ENCODE measurements at regions of chr14 and their contacts with region 1.

Region 1: GRCh38 chr14:39102969-39103957 is at the start of gene SEC23A:
- DNase-seq: peak; percentile 84
- ATAC-seq: peak; percentile 91
- H3K4me3 ChIP-seq: peak within 1 kb of the TSS; percentile 94
- H3K27ac ChIP-seq: peak within 1 kb of the TSS; percentile 74
- H3K4me1 ChIP-seq: peaks cover 15% of the 10 kb centered on the region
- H3K27me3 ChIP-seq: no peaks in the 10 kb centered on the region
- CTCF ChIP-seq: no peak
- total RNA-seq, gene SEC23A: 58.2 and 67.0 TPM in 2 replicates

Region 2: GRCh38 chr14:39114073-39114838 is 11.0 kb after region 1 on chr14 and contains the start of gene GEMIN2:
- CTCF ChIA-PET with region 1: interaction called, 5 read pairs
- POLR2A ChIA-PET with region 1: interaction called, 17 read pairs
- intact Hi-C with region 1: no loop called
- DNase-seq: peak; percentile 97
- ATAC-seq: peak; percentile 98
- H3K4me3 ChIP-seq: peak within 1 kb of the TSS; percentile 90
- H3K27ac ChIP-seq: peak within 1 kb of the TSS; percentile 56
- H3K4me1 ChIP-seq: peaks cover 15% of the 10 kb centered on the region
- H3K27me3 ChIP-seq: no peaks in the 10 kb centered on the region
- CTCF ChIP-seq: no peak
- total RNA-seq, gene GEMIN2: 42.7 and 48.1 TPM in 2 replicates

Region 3: DNA sequence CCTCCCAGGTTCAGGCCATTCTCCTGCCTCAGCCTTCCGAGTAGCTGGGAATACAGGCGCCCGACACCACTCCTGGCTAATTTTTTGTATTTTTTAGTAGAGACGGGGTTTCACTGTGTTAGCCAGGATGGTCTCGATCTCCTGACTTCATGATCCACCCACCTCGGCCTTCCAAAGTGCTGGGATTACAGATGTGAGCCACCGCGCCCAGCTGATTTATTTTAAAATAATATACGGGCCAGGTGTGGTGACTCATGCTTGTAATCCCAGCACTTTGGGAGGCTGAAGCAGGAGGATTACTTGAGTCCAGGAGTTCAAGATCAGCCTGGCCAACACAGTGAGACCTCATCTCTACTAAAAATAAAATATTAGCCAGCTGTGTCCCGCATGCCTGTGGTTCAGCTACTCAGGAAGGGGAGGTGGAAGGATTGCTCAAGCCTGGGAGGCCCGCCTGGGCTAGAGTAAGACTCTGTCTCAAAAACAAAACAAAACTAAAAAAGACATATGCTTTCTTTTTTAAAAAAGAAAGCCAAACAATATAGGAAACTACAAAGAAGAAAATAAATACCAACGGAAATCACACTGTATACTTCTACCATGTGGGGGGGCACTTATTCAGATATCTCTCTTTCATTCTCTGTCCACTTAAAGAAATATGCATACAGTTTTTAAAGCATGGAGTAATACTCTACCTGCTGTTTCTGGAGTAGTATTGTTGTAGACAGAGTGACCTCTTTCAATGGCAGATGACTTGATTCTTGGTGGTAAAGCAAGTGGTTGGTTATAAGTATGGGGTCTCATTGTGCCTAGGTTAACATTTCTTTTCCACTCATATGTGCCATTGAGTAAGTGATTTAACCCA is 129.5 kb after region 1 on chr14:
- CTCF ChIA-PET with region 1: no interaction called
- POLR2A ChIA-PET with region 1: no interaction called
- intact Hi-C with region 1: loop called (anchors 5 kb)
- DNase-seq: no peak
- ATAC-seq: peak; percentile 31; the same call in 1 of the 2 replicates
- H3K4me3 ChIP-seq: no peak overlapping the region
- H3K27ac ChIP-seq: no peak overlapping the region
- H3K4me1 ChIP-seq: no peaks in the 10 kb centered on the region
- H3K27me3 ChIP-seq: no peaks in the 10 kb centered on the region
- CTCF ChIP-seq: no peak

Region 4: DNA sequence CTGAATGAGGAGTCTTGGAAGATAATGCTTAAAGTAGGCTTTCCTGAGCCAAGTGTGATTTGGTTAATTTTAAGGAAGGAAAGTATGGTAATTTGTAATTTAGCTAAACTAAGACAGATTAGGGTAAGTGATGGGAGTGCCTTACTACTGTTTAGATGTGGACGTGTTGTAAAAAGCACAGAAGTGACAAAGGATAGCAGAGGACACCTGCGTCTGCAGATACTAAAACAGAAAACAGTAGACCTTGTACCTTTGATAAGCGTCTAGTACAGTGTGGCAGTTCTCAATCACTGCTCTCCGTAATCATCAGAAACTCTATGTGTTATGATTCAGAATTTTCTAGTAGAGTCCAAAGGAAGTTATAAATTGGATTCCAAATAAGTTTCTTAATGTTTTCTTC is 188.4 kb after region 1 on chr14:
- CTCF ChIA-PET with region 1: no interaction called
- POLR2A ChIA-PET with region 1: no interaction called
- intact Hi-C with region 1: loop called (anchors 10 kb)
- DNase-seq: no peak
- ATAC-seq: no peak
- H3K4me3 ChIP-seq: no peak overlapping the region
- H3K27ac ChIP-seq: no peak overlapping the region
- H3K4me1 ChIP-seq: no peaks in the 10 kb centered on the region
- H3K27me3 ChIP-seq: no peaks in the 10 kb centered on the region
- CTCF ChIP-seq: no peak

Region 5: GRCh38 chr14:39426605-39427004 is 323.3 kb after region 1 on chr14:
- CTCF ChIA-PET with region 1: interaction called, 4 read pairs
- POLR2A ChIA-PET with region 1: no interaction called
- intact Hi-C with region 1: loop called (anchors 1 kb)
- DNase-seq: peak; percentile 60
- ATAC-seq: peak; percentile 58
- H3K4me3 ChIP-seq: no peak overlapping the region; the same call in 1 of the 2 replicates
- H3K27ac ChIP-seq: no peak overlapping the region
- H3K4me1 ChIP-seq: peaks cover 24% of the 10 kb centered on the region
- H3K27me3 ChIP-seq: no peaks in the 10 kb centered on the region
- CTCF ChIP-seq: peak; percentile 65